ENCODE measurements at regions of chr6 and their contacts with region 1.

Region 1: DNA sequence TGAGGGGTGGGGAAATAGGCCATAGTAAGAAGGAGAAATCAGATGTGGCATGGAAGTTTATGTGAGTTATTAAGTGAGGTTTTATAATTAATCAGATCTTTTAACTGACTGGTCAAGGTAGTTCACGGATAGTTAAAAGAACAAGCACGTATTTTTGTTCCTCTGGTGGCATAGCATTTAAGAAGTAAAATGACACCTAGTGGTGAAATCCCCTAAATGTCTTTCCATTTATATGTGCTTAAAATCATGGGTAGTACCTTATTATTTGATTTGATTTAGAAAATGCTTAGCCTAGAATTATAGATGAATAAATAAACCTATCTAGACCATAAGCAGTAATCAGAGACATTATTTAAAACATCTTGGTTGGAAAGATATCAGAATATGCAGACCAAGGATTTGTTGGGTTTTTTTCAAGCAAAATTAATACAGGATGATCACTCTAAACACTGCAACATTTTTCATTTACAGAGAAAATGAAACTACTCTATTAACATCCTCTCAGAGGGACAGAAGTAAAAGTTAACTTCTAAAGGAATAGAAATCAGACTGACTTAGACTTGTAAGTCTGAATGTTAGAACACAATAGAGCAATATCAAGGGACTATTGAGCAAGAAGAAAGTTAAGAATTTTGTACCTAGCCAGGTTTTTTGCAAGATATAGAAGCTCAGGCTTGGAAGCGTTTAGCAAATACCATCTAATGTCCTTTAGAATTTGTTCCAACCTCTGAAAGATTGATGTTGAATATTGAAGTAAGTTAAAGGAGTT is 81.1 kb downstream of the STXBP5 start:
- DNase-seq: no peak
- ATAC-seq: peak; percentile 48

Region 2: DNA sequence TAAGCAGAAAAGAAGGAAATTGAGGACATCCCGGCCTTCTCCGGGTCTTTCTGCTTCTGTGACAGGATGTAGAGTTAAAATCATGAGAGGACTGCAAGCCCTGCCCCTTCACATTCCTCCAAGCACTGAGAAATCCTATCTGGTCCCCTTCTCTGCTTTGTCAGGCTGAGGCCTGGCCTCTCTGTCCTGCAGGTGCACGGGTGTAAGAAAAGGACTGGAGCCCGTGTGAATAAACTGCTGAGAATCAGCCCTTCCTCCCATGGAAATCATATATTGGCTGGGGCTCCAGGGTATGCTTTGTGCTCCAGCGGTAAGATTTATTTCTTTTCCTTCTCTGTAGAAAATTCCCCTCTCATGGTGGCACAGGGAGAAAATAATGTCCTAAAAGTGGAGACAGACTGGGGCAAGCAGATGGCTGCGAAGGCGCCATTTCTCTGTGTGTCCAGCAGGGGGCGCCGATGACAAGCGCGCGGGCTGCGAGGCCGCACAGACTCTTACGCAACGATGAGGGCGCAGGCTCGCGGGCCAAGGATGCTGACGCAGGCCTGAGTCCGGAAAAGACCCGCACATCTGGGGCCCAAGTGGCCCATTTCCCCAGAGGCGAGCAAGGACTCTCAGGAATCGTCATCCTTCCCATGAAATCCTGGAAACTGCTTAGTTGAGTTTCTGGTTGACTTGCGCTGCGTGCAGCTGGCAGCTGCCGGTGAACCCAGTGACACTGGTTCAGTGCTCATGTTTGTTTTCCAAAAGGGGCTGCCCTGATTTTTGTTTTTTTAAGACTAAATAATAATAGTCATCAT is 427.9 kb before region 1 on chr6:
- intact Hi-C with region 1: loop called in 1 of 2 experiments (anchors 10 kb)
- DNase-seq: peak; percentile 68 to 81
- ATAC-seq: peak; percentile 98

Region 3: DNA sequence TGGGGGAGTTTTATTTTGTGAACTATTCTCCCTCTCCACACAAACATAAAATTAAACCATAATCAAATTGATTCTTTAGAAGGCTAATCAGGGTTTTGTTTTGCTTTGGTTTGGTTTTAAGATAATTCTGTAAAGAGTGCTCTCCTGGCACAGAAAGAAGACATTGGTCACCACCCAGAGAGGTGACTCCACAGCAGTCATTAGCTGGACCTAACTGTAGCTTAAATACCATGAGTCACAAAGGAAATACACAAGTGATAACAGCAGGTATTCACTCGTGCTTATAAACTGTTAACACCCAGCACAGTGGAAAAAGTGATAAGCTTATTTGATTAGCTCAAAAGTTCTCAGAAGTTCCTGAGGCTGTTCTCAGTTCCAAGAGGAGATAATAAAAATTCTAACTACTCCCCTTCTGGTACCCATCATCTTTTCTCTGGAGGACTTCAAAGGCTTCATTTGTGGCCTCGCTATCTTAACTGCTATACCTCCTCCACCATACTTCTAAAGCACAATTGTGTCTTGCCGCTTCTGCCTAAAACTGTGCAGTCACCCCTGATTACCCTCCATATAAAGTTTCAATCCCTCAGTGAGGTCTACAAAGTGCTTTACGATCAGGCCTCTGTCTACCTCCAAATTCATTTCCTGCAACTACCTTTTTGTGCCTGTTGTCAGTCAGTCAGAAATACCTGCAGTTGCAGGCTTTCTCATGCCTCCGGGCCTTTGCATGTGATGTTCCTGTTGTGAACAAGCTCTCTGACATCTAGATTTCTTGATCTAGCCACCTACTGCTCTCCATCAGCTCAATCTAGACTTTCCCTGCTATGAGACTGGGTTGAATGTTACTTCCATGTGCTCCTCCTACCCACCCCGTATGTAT is 424.4 kb after region 1 on chr6:
- intact Hi-C with region 1: no loop called
- DNase-seq: no peak
- ATAC-seq: peak; percentile 99